ENCODE measurements at regions of chr14 and their contacts with region 1.

Region 1: DNA sequence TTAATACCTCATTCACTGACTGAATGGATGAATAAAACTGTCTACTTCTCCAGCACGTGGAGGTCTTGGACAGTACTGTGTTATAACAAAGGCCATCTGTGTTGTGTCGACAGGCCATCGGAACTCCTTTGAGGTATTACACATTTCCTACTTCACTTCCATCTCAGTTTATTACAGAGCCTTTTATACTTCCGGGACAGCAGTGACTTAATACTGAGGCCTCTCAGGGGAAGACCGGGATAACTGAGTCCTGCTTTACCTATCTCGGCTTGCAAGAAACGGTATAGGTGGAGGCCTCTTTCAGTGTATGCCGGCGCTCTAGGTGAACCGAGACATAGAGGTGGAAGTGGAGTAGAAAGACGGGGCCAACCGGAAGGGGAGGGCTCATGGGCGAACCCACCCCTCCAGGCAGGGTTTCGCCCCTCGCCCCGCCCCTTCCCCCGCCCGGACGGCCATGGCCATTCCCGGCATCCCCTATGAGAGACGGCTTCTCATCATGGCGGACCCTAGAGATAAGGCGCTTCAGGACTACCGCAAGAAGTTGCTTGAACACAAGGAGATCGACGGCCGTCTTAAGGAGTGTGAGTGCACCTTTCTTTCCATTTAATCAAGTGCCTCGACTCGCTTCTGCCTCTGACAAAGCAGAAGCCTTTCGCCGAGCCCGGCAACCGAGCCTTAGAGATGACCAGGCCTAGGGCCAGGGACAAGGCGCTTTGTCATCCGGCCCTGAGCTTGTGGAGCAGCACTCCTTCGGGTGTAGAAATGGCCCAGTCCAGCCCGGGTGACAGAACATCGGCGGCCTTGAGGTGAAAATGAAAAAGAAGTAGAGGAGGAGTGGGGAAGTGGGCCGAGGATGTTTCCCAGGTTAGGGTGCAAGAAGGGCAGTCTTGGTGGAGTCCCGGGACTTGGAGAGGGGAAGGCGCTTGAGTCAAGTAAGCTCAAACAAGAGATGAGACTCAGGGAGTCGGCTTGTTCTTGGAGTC is at the start of gene PSMC6:
- DNase-seq: peak; percentile 87 to 97 (median 94)
- H3K4me3 ChIP-seq: peak within 1 kb of the TSS; percentile 67 to 99 (median 90)
- H3K27ac ChIP-seq: peak within 1 kb of the TSS; percentile 74 to 96 (median 90)
- H3K27me3 ChIP-seq: no peaks in the 10 kb centered on the region
- CTCF ChIP-seq: peak in 12 of 56 donors; percentile 9 to 51 (median 24)
- total RNA-seq, gene PSMC6: 54.2 to 114 (median 88.1) TPM

Region 2: DNA sequence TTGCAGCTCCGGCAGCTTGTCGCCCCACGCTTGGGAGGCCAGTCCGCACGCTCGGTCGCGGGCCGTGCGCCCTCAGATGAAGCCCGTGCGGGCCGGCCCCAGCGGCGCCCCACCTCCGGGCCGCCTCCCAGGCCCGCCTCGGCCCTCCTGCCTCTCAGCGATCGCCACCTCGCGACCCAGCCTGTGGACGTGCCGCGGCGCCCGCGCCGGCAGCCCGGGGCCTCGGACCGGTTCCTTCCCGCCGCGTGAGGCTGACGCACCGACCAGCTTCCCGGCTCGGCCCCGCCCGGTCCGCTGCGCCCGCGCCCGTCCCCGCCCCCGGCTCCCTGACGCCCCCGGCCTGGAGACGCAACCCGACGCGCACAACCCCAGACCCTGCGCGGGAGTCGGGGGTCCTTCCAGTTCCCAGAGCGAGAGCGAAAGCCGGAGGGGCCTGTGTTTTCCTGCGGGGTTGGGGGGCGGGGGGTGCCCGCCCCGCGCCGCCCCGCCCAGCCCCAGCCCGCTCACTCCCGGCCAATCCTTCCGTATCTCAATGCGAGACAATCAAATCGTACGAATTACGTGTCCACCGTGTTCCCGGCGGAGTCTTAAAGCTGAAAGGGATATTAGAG is 11.4 kb before region 1 on chr14 and contains the start of gene ERO1A:
- intact Hi-C with region 1: loop called in 1 of 2 experiments (anchors 1 kb)
- DNase-seq: peak; percentile 54 to 85 (median 66)
- H3K4me3 ChIP-seq: peak within 1 kb of the TSS; percentile 75 to 99 (median 93)
- H3K27ac ChIP-seq: peak within 1 kb of the TSS; percentile 56 to 98 (median 90)
- H3K27me3 ChIP-seq: no peaks in the 10 kb centered on the region
- CTCF ChIP-seq: peak in 3 of 56 donors; percentile 7 to 30 (median 9)
- total RNA-seq, gene ERO1A: 23.4 to 69.4 (median 42.5) TPM

Region 3: GRCh38 chr14:52729925-52730667 is 23.1 kb after region 1 on chr14 and contains the start of gene STYX:
- intact Hi-C with region 1: loop called in 1 of 2 experiments (anchors 1 kb)
- DNase-seq: peak; percentile 90 to 98 (median 96)
- H3K4me3 ChIP-seq: peak within 1 kb of the TSS; percentile 70 to 99 (median 94)
- H3K27ac ChIP-seq: peak within 1 kb of the TSS in 58 of 59 donors; percentile 22 to 92 (median 78)
- H3K27me3 ChIP-seq: no peaks in the 10 kb centered on the region
- CTCF ChIP-seq: peak in 50 of 56 donors; percentile 11 to 71 (median 40)
- total RNA-seq, gene STYX: 5.3 to 12.8 (median 7.4) TPM

Region 4: DNA sequence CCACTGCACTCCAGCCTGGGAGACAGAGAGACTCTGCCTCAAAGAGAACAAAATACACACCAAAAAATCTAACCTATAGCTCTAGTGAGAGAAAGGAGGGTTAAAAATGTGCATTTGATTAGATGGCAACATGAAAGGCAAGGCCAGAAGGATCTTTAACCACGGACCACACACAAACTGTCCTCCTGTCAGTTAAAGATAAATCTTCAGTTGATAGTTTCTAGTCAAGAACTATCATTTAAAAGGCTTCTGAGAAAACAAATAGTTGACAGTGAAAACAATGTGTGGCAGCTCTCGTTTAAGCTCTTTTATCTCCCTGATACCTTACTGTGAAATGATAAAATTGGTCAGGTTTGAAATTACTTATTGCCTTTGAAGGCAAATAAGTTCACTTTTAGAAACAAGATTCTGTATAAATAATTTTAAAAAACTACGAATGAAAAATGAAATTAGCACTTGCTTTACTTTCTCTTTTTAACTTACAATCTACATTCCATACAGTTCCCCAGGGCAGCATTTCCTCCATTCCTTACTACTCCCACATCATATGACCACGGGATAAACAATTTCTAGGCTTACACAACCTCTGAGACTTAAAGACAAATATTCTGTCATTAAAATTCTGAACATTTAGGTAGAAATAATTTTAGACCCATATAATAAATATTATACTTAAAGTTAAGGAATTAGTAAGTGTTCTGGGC is 155.8 kb after region 1 on chr14:
- intact Hi-C with region 1: no loop called
- DNase-seq: no peak
- H3K4me3 ChIP-seq: no peak overlapping the region
- H3K27ac ChIP-seq: peak overlapping the region in 2 of 59 donors; percentile 1 to 20
- H3K27me3 ChIP-seq: no peaks in the 10 kb centered on the region
- CTCF ChIP-seq: no peak